Endothelial cell of umbilical vein (primary cell): ENCODE measurements at regions of chr11 and their contacts with region 1.

Region 1: GRCh38 chr11:65095974-65096806 is at the start of gene VPS51:
- DNase-seq: peak; percentile 76
- H3K4me3 ChIP-seq: peak within 1 kb of the TSS; percentile 55 to 62 (median 56)
- H3K27ac ChIP-seq: peak within 1 kb of the TSS; percentile 46
- H3K4me1 ChIP-seq: peaks cover 6% of the 10 kb centered on the region
- H3K27me3 ChIP-seq: no peaks in the 10 kb centered on the region
- CTCF ChIP-seq: no peak
- POLR2A ChIP-seq: peak; percentile 94
- total RNA-seq, gene VPS51: 102 and 108 TPM in 2 replicates

Region 2: DNA sequence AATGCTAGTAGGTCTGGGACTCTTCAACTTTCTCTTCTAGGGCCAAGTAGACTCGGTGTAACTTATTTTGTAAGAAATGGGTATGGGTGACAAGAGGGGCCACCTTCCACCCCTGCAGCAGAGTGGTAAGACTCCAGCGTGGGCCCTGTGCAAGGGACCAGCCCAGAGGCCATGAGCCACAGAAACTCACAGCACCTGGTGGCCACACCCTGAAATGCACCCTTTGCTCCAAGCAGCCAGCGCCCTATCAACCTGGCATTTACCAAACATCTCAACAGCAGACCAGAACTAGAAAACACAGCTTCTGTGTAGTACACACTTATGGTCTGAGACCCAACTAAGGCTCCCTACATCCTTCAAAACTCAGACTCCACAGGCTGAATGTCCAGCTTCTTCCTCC is 18.0 kb before region 1 on chr11:
- CTCF ChIA-PET with region 1: no interaction called
- POLR2A ChIA-PET with region 1: interaction called, 12 read pairs
- dilution Hi-C with region 1: no loop called
- intact Hi-C with region 1: no loop called
- DNase-seq: peak; percentile 22
- H3K4me3 ChIP-seq: no peak overlapping the region
- H3K27ac ChIP-seq: no peak overlapping the region
- H3K4me1 ChIP-seq: peaks cover 6% of the 10 kb centered on the region
- H3K27me3 ChIP-seq: no peaks in the 10 kb centered on the region
- CTCF ChIP-seq: peak; percentile 51 to 67
- POLR2A ChIP-seq: no peak

Region 3: DNA sequence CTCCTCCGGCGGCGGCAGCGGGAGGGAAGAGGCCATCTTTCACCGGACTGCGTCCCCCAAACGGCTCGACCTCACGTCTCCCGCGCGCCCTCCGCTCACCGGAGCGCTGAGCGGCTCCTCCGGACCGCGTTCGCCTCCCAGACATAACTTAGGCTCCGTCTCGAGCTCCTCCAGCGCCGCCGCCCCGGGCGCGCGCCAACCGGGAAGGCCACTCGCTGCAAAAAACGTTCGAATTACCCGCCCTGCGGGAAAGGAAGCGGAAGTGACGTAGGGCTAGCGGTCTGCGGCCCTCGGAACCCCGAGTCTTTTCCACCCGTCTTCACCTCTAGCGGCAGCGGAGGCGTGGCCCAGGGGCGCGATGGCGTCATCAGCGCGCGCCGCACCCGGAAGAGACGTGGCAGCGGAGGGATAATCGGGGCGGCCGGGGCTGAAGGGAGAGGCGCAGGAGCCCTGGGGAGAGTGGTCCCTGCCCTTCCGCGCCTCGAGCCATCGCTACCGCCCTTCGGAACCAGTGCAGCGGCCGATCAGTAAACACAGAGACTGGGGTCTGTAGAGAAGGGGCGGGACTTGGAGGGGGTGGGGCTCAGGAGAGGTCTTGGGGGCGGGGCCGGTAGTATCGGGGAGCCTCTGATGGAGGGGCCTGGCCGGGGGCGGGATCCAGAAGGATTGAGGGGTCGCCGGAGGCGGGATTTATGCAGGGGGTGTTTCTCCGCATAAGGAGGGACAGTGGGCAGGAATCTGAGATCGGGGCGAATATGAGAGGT is 12.2 kb before region 1 on chr11 and contains the starts of genes CDCA5 and ZFPL1:
- CTCF ChIA-PET with region 1: no interaction called
- POLR2A ChIA-PET with region 1: no interaction called
- dilution Hi-C with region 1: no loop called
- intact Hi-C with region 1: loop called (anchors 1 kb)
- DNase-seq: peak; percentile 96
- H3K4me3 ChIP-seq: peak within 1 kb of the TSS; percentile 58 to 92 (median 83)
- H3K27ac ChIP-seq: peak within 1 kb of the TSS; percentile 61
- H3K4me1 ChIP-seq: peaks cover 17% of the 10 kb centered on the region
- H3K27me3 ChIP-seq: no peaks in the 10 kb centered on the region
- CTCF ChIP-seq: no peak
- POLR2A ChIP-seq: no peak
- total RNA-seq, gene CDCA5: 34.1 and 35.7 TPM in 2 replicates
- total RNA-seq, gene ZFPL1: 37.6 and 45.1 TPM in 2 replicates